Activated B cell treated with CpG ODN at 0.5 μM for 24 hours (primary cell): ENCODE measurements at regions of chr3 and their contacts with region 1.

Region 1: DNA sequence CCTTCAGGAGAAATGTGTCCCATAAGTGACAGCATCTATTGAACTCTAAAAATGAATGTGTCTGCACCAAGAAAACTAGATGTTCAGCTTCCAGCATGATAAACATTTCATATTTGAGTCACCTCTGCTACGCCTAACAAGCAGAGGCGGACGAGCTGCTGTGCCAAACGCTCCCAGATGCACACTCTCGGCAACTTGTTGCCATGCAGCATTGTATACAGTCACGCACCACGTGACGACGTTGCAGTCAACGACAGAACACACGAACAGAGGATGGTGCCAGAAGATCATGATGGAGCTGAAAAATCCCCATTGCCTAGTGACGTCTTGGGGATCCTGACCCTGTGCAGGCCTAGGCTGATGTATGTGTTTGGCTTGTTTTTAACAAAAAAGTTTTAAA is 137.5 kb downstream of the XXYLT1 start:
- DNase-seq: no peak
- ATAC-seq: peak; percentile 8
- H3K4me3 Mint-ChIP-seq: no peak overlapping the region
- H3K27ac Mint-ChIP-seq: no peak overlapping the region
- H3K4me1 Mint-ChIP-seq: peaks cover 39% of the 10 kb centered on the region
- H3K27me3 Mint-ChIP-seq: no peaks in the 10 kb centered on the region
- CTCF ChIP-seq: no peak

Region 2: GRCh38 chr3:194671900-194672808 is 461.3 kb before region 1 on chr3 and contains the start of gene LSG1:
- CTCF ChIA-PET with region 1: interaction called, 4 read pairs
- POLR2A ChIA-PET with region 1: interaction called, 22 read pairs
- intact Hi-C with region 1: no loop called
- DNase-seq: peak; percentile 80
- ATAC-seq: peak; percentile 94
- H3K4me3 Mint-ChIP-seq: peak within 1 kb of the TSS; percentile 99
- H3K27ac Mint-ChIP-seq: peak within 1 kb of the TSS; percentile 99
- H3K4me1 Mint-ChIP-seq: peaks cover 22% of the 10 kb centered on the region
- H3K27me3 Mint-ChIP-seq: peaks cover 6% of the 10 kb centered on the region
- CTCF ChIP-seq: no peak
- total RNA-seq, gene LSG1: 55.1 and 55.4 TPM in 2 replicates

Region 3: DNA sequence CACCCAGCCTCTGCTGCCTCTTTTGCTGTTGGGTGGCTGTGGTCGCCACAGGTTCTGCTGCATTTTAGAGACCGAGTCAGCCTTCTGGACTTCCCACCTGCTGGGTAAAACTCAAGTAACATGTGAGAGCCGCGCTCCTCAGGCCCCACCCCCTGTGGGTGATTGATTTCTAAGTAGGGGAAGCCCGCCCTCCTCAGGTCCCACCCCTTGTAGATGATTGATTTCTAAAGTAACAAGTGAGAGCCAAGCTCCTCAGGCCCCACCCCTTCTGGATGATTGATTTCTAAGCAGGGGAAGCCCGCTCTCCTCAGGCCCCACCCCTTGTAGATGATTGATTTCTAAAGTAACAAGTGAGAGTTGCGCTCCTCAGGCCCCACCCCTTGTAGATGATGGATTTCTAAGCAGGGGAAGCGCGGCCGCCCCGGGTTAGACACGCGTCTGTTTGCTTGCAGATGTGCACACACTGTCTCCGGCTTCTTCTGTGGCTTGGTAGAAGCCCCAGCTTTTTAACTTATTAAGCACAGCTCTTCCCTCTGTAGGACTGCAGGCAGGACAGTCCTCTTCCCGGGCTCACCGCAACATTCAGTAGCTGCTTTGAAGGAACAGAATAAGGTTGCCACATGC is 364.3 kb before region 1 on chr3:
- CTCF ChIA-PET with region 1: no interaction called
- POLR2A ChIA-PET with region 1: interaction called, 3 read pairs
- intact Hi-C with region 1: loop called (anchors 1 kb)
- DNase-seq: peak; percentile 69
- ATAC-seq: peak; percentile 98
- H3K4me3 Mint-ChIP-seq: peak overlapping the region; percentile 86
- H3K27ac Mint-ChIP-seq: peak overlapping the region; percentile 94
- H3K4me1 Mint-ChIP-seq: peaks cover 34% of the 10 kb centered on the region
- H3K27me3 Mint-ChIP-seq: peaks cover 5% of the 10 kb centered on the region
- CTCF ChIP-seq: no peak

Region 4: GRCh38 chr3:194967151-194968117 is 166.0 kb before region 1 on chr3:
- CTCF ChIA-PET with region 1: no interaction called
- POLR2A ChIA-PET with region 1: no interaction called
- intact Hi-C with region 1: no loop called
- DNase-seq: no peak
- ATAC-seq: no peak
- H3K4me3 Mint-ChIP-seq: no peak overlapping the region
- H3K27ac Mint-ChIP-seq: no peak overlapping the region
- H3K4me1 Mint-ChIP-seq: no peaks in the 10 kb centered on the region
- H3K27me3 Mint-ChIP-seq: no peaks in the 10 kb centered on the region
- CTCF ChIP-seq: no peak

Region 5: GRCh38 chr3:195106418-195106906 is 27.0 kb before region 1 on chr3:
- CTCF ChIA-PET with region 1: interaction called, 7 read pairs
- POLR2A ChIA-PET with region 1: interaction called, 3 read pairs
- intact Hi-C with region 1: loop called (anchors 2 kb)
- DNase-seq: peak; percentile 86
- ATAC-seq: peak; percentile 98
- H3K4me3 Mint-ChIP-seq: peak overlapping the region; percentile 67
- H3K27ac Mint-ChIP-seq: peak overlapping the region; percentile 61
- H3K4me1 Mint-ChIP-seq: peaks cover 35% of the 10 kb centered on the region
- H3K27me3 Mint-ChIP-seq: no peaks in the 10 kb centered on the region
- CTCF ChIP-seq: peak; percentile 94

Region 6: DNA sequence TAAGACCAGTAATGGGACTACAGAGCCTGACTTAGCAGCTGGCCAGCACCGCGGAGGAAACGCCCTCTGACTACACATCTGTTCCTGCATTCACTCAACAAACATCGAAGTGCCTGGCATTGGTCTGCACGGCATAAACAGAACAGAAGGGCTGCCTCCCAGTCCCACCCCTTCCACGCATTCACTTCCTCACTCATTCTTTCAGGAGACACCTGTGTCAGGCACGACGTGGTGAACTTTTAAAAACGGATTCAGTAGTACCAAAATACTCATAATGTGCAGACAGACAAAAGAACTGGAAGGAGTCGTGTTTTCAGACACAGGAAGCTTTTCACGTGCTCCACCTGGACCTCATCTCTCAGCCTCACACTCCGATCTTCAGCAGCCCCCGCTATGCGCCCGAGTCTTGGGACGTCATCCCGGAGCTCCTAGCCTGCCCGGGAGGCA is 14.2 kb after region 1 on chr3:
- CTCF ChIA-PET with region 1: interaction called, 8 read pairs
- POLR2A ChIA-PET with region 1: interaction called, 44 read pairs
- intact Hi-C with region 1: loop called (anchors 1 kb)
- DNase-seq: peak; percentile 34
- ATAC-seq: peak; percentile 72
- H3K4me3 Mint-ChIP-seq: peak overlapping the region; percentile 85
- H3K27ac Mint-ChIP-seq: peak overlapping the region; percentile 84
- H3K4me1 Mint-ChIP-seq: peaks cover 75% of the 10 kb centered on the region
- H3K27me3 Mint-ChIP-seq: no peaks in the 10 kb centered on the region
- CTCF ChIP-seq: no peak

Region 7: DNA sequence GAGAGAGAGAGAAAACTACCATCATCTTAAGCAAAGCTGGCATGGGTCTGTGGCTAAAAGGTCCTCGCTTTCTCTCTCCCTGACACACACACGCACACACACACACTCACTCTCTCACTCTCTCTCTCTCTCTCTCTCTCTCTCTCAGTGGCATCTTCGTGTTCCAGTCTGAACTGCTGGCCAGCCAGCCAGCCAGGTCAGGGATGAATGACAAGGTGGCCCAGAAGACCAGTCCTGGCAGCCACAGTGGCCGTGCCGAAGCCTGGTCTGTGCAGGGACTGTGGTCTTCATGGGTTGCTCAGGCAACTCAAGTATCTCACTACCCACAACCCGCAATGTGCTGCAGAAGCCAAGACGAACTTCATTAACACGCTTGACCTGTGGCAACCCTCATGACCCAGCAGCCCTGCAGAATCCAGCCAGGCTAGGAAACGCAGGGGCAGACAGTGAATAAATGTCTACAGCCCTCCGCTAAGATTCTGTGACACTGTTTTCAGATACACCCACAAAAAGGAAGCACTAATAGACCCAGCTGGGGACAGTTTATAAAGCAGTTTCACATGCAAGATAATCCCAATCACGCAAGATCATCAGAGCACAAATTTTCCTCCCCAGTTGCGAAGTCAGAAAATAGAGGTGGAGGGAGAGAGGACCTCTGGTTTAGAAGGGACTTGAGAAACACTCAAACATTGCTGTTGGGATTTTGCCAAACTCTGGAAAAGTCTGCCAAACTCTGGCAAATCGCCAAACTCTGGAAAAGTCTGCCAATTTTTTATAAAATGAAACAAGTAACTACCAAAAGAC is 71.1 kb after region 1 on chr3:
- CTCF ChIA-PET with region 1: interaction called, 3 read pairs
- POLR2A ChIA-PET with region 1: interaction called, 5 read pairs
- intact Hi-C with region 1: loop called (anchors 5 kb)
- DNase-seq: no peak
- ATAC-seq: peak; percentile 30
- H3K4me3 Mint-ChIP-seq: peak overlapping the region; percentile 25
- H3K27ac Mint-ChIP-seq: peak overlapping the region; percentile 82
- H3K4me1 Mint-ChIP-seq: peaks cover 31% of the 10 kb centered on the region
- H3K27me3 Mint-ChIP-seq: no peaks in the 10 kb centered on the region
- CTCF ChIP-seq: no peak

Region 8: GRCh38 chr3:195542698-195543499 is 409.4 kb after region 1 on chr3 and contains the start of gene PPP1R2:
- CTCF ChIA-PET with region 1: no interaction called
- POLR2A ChIA-PET with region 1: interaction called, 3 read pairs
- intact Hi-C with region 1: loop called (anchors 10 kb)
- DNase-seq: peak; percentile 95
- ATAC-seq: peak; percentile 84
- H3K4me3 Mint-ChIP-seq: peak within 1 kb of the TSS; percentile 91
- H3K27ac Mint-ChIP-seq: peak within 1 kb of the TSS; percentile 92
- H3K4me1 Mint-ChIP-seq: peaks cover 76% of the 10 kb centered on the region
- H3K27me3 Mint-ChIP-seq: no peaks in the 10 kb centered on the region
- CTCF ChIP-seq: no peak
- total RNA-seq, gene PPP1R2: 62.5 and 64.1 TPM in 2 replicates